GM18951 (cell line): ENCODE measurements at regions of chr4 and their contacts with region 1.

Region 1: DNA sequence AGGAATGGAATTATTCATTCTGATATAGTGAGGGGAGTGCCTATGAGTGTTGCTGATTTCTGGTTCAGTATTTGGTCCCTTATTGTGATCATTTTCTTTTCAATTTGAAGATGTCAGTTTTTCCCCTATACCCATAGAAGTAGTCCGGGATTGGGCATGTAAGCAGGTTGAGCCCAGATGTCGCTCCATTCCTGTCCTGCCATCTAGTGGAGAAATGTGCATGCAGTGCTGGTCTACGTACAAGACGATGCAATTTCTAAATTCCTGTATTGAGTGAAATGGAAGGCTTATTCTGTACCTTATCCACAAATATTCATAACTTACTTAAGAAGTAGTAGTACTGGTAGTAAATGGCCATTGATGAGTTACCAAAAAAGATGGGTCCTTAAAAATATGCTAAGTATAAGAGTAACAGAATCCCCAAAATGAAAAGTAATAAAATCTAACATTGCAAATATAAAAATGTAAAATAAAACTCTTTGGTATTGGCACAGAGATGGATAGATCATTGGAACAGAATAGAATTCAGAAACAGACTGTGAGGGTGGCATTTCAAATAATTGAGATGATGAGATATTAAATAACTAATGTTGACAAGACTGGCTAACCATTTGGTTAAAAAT is 60.9 kb downstream of the UGT8 start:
- POLR2A ChIP-seq: no peak

Region 2: GRCh38 chr4:113394730-113395530 is 1264.6 kb before region 1 on chr4:
- in situ Hi-C with region 1: loop called (anchors 25 kb)
- POLR2A ChIP-seq: no peak

Region 3: GRCh38 chr4:114146947-114147618 is 512.4 kb before region 1 on chr4:
- in situ Hi-C with region 1: no loop called
- POLR2A ChIP-seq: no peak

Region 4: DNA sequence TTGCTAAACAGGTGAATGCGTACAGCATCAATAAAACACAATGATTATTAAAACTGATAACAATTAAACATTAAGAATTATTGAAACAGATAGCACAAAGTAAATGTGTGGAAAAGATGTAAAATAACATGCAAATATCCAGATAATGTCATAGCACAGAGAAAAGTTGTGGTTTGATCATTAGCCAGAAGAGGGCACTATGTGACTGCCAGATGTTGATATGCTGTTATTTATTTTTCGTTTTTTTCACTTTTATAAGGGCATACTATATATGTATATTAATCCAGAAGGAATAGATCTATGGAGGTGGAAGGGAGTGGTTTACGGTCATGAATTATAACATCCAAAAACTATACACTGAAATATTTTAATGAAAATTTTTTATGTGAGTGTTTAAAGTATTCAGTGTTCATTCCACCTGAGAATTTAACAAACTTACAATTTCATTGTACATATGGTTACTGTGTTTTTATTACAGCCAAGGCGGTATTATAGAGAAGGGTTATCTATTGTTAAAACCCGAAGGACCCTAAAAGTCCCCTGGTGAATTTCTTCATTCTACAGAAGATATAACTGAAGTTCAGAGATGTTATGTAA is 272.8 kb before region 1 on chr4:
- in situ Hi-C with region 1: loop called (anchors 25 kb)
- POLR2A ChIP-seq: no peak